Dorsolateral prefrontal cortex (tissue), 120 donors: ENCODE measurements at regions of chr9 and their contacts with region 1.

Region 1: DNA sequence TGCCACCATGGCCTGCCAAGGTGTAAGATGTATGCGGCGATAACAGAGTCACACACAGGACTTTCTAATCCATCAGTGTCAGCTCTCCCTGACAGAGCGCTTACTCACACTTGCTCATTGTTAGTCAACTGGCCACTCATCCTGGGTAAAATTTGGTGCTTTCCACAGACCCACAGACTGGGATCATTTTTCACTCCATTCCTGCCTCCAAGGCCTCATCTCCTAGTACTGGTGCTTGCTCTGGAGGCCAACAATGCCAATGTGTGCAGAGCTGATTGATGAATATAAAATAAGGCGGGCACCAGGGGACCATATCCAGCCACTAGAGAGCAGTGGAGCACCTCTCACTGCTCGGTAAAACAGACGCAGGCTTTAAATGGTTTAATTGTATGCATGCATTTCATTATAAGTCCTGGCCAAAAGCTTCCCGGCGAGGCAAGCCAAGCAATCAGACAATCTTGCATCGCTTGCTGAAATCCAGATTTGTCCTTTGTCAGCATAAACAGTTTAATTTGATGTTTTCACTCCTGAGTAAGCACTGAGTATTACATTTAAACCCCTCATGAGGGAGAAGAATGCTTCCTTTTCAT is 22.3 kb downstream of the PSMB7 start:
- DNase-seq: peak; percentile 25 to 91 (median 72)
- H3K4me3 ChIP-seq: peak overlapping the region in 10 of 59 donors; percentile 1 to 42 (median 14)
- H3K27ac ChIP-seq: peak overlapping the region in 47 of 59 donors; percentile 9 to 84 (median 56)
- H3K27me3 ChIP-seq: no peaks in the 10 kb centered on the region
- CTCF ChIP-seq: peak; percentile 41 to 90 (median 73)

Region 2: GRCh38 chr9:123941524-123942070 is 451.4 kb before region 1 on chr9:
- intact Hi-C with region 1: no loop called
- DNase-seq: no peak
- H3K4me3 ChIP-seq: no peak overlapping the region
- H3K27ac ChIP-seq: no peak overlapping the region
- H3K27me3 ChIP-seq: no peaks in the 10 kb centered on the region
- CTCF ChIP-seq: no peak

Region 3: GRCh38 chr9:124415102-124415851 is 22.3 kb after region 1 on chr9 and contains the start of gene PSMB7:
- intact Hi-C with region 1: loop called in 1 of 2 experiments (anchors 1 kb)
- DNase-seq: peak; percentile 92 to 97 (median 95)
- H3K4me3 ChIP-seq: peak within 1 kb of the TSS; percentile 58 to 99 (median 91)
- H3K27ac ChIP-seq: peak within 1 kb of the TSS in 27 of 59 donors; percentile 1 to 83 (median 53)
- H3K27me3 ChIP-seq: no peaks in the 10 kb centered on the region
- CTCF ChIP-seq: peak; percentile 86 to 99 (median 97)
- total RNA-seq, gene PSMB7: 64.5 to 154 (median 123) TPM